CD8-positive, alpha-beta T cell (primary cell): ENCODE measurements at regions of chr1 and their contacts with region 1.

Region 1: DNA sequence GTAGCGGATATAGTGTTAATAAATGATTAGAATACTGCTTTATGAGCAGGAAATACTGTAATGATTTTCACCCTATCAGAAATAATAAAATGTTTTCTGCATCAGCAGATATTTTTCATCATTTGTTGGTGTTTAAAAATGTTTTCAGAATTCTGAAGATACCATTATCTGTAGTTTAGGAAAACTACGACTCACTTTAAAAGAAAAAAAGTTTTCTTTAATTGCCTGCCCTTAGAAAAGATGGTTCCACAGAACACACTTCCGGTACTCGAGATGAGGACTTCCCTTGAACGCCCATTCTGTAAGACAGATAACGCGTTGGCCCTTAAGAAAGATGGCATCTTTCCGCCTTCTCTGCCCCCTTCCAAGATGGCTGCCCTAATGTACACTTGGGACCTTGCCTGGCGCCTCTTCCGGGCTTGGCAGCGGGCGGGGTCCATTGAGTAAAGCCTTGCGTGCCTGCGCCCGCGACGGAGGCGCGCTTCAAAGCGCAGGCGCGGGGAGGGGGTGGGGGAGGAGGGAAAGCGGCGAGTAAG is at the start of gene SZRD1:
- DNase-seq: peak; percentile 89 to 100 (median 95)
- ATAC-seq: peak; percentile 86
- H3K4me3 ChIP-seq: peak within 1 kb of the TSS; percentile 99
- H3K4me3 Mint-ChIP-seq: peak within 1 kb of the TSS; percentile 99
- H3K27ac ChIP-seq: peak within 1 kb of the TSS; percentile 96 to 100
- H3K27ac Mint-ChIP-seq: peak within 1 kb of the TSS; percentile 99
- H3K4me1 ChIP-seq: peaks cover 31% of the 10 kb centered on the region
- H3K4me1 Mint-ChIP-seq: peaks cover 37% of the 10 kb centered on the region
- H3K27me3 ChIP-seq: no peaks in the 10 kb centered on the region
- H3K27me3 Mint-ChIP-seq: no peaks in the 10 kb centered on the region
- CTCF ChIP-seq: no peak
- total RNA-seq, gene SZRD1: 133 to 136 TPM

Region 2: DNA sequence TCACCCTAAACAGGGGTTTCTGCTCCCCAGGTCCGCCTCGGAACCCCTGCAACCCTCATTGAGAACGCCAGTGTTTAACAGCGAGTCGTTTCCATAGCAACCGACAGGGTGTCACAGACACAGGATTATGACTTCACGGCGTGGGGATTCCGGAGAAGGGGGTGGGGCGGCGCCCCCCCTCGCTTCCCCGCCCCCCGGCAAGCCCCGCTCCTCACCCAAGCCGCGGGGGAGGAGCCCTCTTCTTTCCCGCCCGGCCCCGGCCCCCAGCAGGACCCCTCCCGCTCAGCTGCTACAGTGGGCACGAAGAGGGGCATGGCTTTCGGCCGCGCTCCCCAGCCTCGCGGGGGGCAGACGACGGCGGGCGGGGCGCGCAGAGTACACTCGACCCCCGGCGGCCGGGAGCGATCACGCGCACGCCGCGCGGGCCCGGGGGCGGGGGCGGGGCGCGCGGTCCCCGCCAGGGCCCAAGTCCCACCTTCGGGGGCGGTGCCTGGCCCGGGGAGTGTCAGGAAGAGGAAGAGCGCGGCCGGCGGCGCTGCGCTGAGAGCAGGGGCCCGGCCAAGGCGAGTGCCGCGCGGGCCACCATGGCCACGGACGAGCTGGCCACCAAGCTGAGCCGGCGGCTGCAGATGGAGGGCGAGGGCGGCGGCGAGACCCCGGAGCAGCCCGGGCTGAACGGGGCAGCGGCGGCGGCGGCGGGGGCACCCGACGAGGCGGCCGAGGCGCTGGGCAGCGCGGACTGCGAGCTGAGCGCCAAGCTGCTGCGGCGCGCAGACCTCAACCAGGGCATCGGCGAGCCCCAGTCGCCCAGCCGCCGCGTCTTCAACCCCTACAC is 957.2 kb before region 1 on chr1 and contains the start of gene EFHD2:
- CTCF ChIA-PET with region 1: interaction called, 3 read pairs
- POLR2A ChIA-PET with region 1: no interaction called
- intact Hi-C with region 1: loop called in 1 of 2 experiments (anchors 5 kb)
- DNase-seq: peak; percentile 73 to 99 (median 85)
- ATAC-seq: peak; percentile 76
- H3K4me3 ChIP-seq: peak within 1 kb of the TSS; percentile 79 to 95
- H3K4me3 Mint-ChIP-seq: peak within 1 kb of the TSS; percentile 92
- H3K27ac ChIP-seq: peak within 1 kb of the TSS; percentile 74 to 99
- H3K27ac Mint-ChIP-seq: peak within 1 kb of the TSS; percentile 97
- H3K4me1 ChIP-seq: peaks cover 48% of the 10 kb centered on the region
- H3K4me1 Mint-ChIP-seq: peaks cover 49% of the 10 kb centered on the region
- H3K27me3 ChIP-seq: no peaks in the 10 kb centered on the region
- H3K27me3 Mint-ChIP-seq: no peaks in the 10 kb centered on the region
- CTCF ChIP-seq: no peak
- total RNA-seq, gene EFHD2: 81.2 to 87.9 TPM

Region 3: GRCh38 chr1:15847100-15847892 is 519.5 kb before region 1 on chr1 and contains the start of gene SPEN:
- CTCF ChIA-PET with region 1: no interaction called
- POLR2A ChIA-PET with region 1: no interaction called
- intact Hi-C with region 1: loop called (anchors 2 to 5 kb)
- DNase-seq: peak; percentile 95 to 99 (median 99)
- ATAC-seq: peak; percentile 80
- H3K4me3 ChIP-seq: peak within 1 kb of the TSS; percentile 96 to 99
- H3K4me3 Mint-ChIP-seq: peak within 1 kb of the TSS; percentile 98
- H3K27ac ChIP-seq: peak within 1 kb of the TSS; percentile 91 to 93
- H3K27ac Mint-ChIP-seq: peak within 1 kb of the TSS; percentile 97
- H3K4me1 ChIP-seq: peaks cover 24% of the 10 kb centered on the region
- H3K4me1 Mint-ChIP-seq: peaks cover 36% of the 10 kb centered on the region
- H3K27me3 ChIP-seq: no peaks in the 10 kb centered on the region
- H3K27me3 Mint-ChIP-seq: no peaks in the 10 kb centered on the region
- CTCF ChIP-seq: no peak
- total RNA-seq, gene SPEN: 85.9 to 87.3 TPM

Region 4: DNA sequence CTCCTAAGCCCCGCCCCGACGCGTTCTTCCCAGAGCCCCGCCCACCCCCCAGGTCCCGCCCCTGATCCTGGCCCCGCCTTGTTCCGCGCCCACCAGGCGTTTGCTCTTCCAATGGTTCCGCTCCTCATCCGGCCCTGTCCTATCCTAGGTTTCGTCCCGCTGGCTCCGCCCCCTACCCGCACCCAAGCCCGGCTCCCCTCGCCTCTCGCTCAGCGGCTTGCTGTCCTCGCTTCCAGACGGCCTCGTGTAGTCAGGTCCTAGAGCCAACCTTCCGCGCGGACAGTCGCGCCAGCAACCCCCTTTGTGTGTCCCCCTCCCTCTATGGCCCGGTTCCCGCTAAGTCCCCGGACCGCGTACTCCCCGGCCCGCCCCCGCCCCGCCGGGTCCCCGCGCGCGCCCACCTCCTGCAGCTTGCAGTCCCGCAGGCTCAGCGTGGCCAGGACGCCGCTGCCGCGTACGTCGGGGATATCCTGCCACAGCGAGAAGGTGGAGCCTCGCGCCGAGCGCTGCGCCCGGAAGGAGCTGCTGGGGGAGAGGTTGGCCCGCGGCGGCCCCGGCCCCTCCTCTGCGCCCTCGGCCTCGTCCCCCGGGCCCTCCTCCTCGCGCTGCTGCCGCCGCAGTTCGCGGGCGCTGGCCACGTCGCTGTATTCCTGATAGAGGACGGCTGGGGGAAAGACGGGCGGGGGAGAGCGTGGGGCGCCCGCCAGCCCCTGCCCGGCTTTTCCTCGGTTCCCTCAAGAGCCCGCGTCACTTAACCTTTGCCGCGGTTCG is 160.1 kb before region 1 on chr1:
- CTCF ChIA-PET with region 1: interaction called, 7 read pairs
- POLR2A ChIA-PET with region 1: no interaction called
- intact Hi-C with region 1: loop called (anchors 1 kb)
- DNase-seq: peak; percentile 84 to 97 (median 93)
- ATAC-seq: peak; percentile 86
- H3K4me3 ChIP-seq: peak overlapping the region; percentile 68 to 83
- H3K4me3 Mint-ChIP-seq: peak overlapping the region; percentile 93
- H3K27ac ChIP-seq: peak overlapping the region; percentile 69 to 87
- H3K27ac Mint-ChIP-seq: peak overlapping the region; percentile 95
- H3K4me1 ChIP-seq: peaks cover 14% of the 10 kb centered on the region
- H3K4me1 Mint-ChIP-seq: peaks cover 10% of the 10 kb centered on the region
- H3K27me3 ChIP-seq: no peaks in the 10 kb centered on the region
- H3K27me3 Mint-ChIP-seq: no peaks in the 10 kb centered on the region
- CTCF ChIP-seq: no peak

Region 5: GRCh38 chr1:16440470-16441281 is 73.9 kb after region 1 on chr1 and contains the start of gene NECAP2:
- CTCF ChIA-PET with region 1: interaction called, 5 read pairs
- POLR2A ChIA-PET with region 1: interaction called, 5 read pairs
- intact Hi-C with region 1: loop called (anchors 1 kb)
- DNase-seq: peak; percentile 90 to 98 (median 94)
- ATAC-seq: peak; percentile 80
- H3K4me3 ChIP-seq: peak within 1 kb of the TSS; percentile 82 to 100
- H3K4me3 Mint-ChIP-seq: peak within 1 kb of the TSS; percentile 88
- H3K27ac ChIP-seq: peak within 1 kb of the TSS; percentile 89 to 100
- H3K27ac Mint-ChIP-seq: peak within 1 kb of the TSS; percentile 94
- H3K4me1 ChIP-seq: peaks cover 29% of the 10 kb centered on the region
- H3K4me1 Mint-ChIP-seq: peaks cover 35% of the 10 kb centered on the region
- H3K27me3 ChIP-seq: no peaks in the 10 kb centered on the region
- H3K27me3 Mint-ChIP-seq: no peaks in the 10 kb centered on the region
- CTCF ChIP-seq: peak; percentile 85
- total RNA-seq, gene NECAP2: 52.1 to 53.7 TPM

Region 6: DNA sequence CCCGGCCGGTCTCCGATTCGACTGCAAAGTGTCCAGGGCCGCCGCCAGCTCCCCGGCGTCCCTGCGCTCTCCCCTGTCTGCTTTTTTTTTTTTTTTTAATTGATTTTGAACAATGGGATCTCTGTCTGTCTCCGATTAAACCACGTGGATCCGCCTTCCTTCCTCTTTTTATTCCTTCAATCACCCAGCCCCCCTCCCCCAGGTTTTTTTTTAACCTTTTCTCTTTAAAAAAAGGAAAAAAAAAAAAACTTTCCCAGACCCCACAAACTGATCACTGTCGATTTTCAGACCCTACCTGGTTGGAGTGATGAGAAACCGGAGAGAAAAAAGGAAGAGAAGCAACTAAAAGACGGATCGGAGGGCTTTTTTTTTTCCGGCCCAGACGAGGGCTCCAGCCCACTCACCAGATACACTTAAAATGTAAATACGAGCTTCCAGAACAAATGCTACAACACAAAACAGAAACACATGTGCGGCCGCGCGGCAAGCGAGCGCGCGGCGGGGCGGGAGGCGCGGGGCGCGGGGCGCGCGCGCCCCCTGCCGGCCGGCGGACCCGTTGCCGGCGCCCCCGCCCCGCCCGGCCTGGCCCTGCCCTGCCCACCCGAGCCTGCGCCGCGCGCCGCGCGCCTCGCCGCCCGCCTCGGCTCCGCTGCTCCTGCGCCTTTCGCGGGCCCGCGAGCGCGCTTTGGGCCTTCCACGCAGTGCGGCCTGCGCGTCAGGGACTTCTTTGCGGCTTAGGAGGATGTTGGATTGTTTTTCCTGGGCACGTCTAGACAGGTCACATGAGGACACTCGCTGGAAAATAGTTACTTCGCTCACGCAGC is 1072.7 kb after region 1 on chr1 and contains the start of gene RCC2:
- CTCF ChIA-PET with region 1: no interaction called
- POLR2A ChIA-PET with region 1: no interaction called
- intact Hi-C with region 1: loop called in 1 of 2 experiments (anchors 10 kb)
- DNase-seq: peak; percentile 51 to 89 (median 72)
- ATAC-seq: peak; percentile 74
- H3K4me3 ChIP-seq: peak within 1 kb of the TSS; percentile 90 to 98
- H3K4me3 Mint-ChIP-seq: peak within 1 kb of the TSS; percentile 97
- H3K27ac ChIP-seq: peak within 1 kb of the TSS; percentile 80 to 82
- H3K27ac Mint-ChIP-seq: peak within 1 kb of the TSS; percentile 97
- H3K4me1 ChIP-seq: peaks cover 32% of the 10 kb centered on the region
- H3K4me1 Mint-ChIP-seq: peaks cover 34% of the 10 kb centered on the region
- H3K27me3 ChIP-seq: no peaks in the 10 kb centered on the region
- H3K27me3 Mint-ChIP-seq: no peaks in the 10 kb centered on the region
- CTCF ChIP-seq: no peak
- total RNA-seq, gene RCC2: 25.4 to 28.0 TPM